T-cell (primary cell): ENCODE measurements at regions of chr4 and their contacts with region 1.

Region 1: GRCh38 chr4:86582410-86582809 is 11.7 kb upstream of the PTPN13 start:
- DNase-seq: no peak
- ATAC-seq: no peak
- H3K4me3 ChIP-seq: no peak overlapping the region
- H3K4me3 Mint-ChIP-seq: no peak overlapping the region
- H3K27ac ChIP-seq: no peak overlapping the region
- H3K27ac Mint-ChIP-seq: no peak overlapping the region
- H3K4me1 ChIP-seq: no peaks in the 10 kb centered on the region
- H3K4me1 Mint-ChIP-seq: no peaks in the 10 kb centered on the region
- H3K27me3 ChIP-seq: no peaks in the 10 kb centered on the region
- H3K27me3 Mint-ChIP-seq: peaks cover 0 to 6% of the 10 kb centered on the region in 2 donors

Region 2: GRCh38 chr4:86633854-86634253 is 51.4 kb after region 1 on chr4:
- CTCF ChIA-PET with region 1: no interaction called
- POLR2A ChIA-PET with region 1: no interaction called
- DNase-seq: no peak
- ATAC-seq: no peak
- H3K4me3 ChIP-seq: no peak overlapping the region
- H3K4me3 Mint-ChIP-seq: no peak overlapping the region
- H3K27ac ChIP-seq: no peak overlapping the region
- H3K27ac Mint-ChIP-seq: no peak overlapping the region
- H3K4me1 ChIP-seq: no peaks in the 10 kb centered on the region
- H3K4me1 Mint-ChIP-seq: no peaks in the 10 kb centered on the region
- H3K27me3 ChIP-seq: no peaks in the 10 kb centered on the region
- H3K27me3 Mint-ChIP-seq: peaks cover 5% of the 10 kb centered on the region in 2 donors

Region 3: GRCh38 chr4:86855573-86855992 is 273.2 kb after region 1 on chr4:
- CTCF ChIA-PET with region 1: no interaction called
- POLR2A ChIA-PET with region 1: interaction called in 1 of 2 experiments, 10 read pairs
- DNase-seq: no peak
- ATAC-seq: no peak
- H3K4me3 ChIP-seq: no peak overlapping the region
- H3K4me3 Mint-ChIP-seq: no peak overlapping the region
- H3K27ac ChIP-seq: no peak overlapping the region
- H3K27ac Mint-ChIP-seq: no peak overlapping the region
- H3K4me1 ChIP-seq: no peaks in the 10 kb centered on the region
- H3K4me1 Mint-ChIP-seq: no peaks in the 10 kb centered on the region
- H3K27me3 ChIP-seq: peaks cover 0 to 5% of the 10 kb centered on the region in 2 experiments
- H3K27me3 Mint-ChIP-seq: peaks cover 0 to 4% of the 10 kb centered on the region in 2 donors